ENCODE measurements at regions of chr3 and their contacts with region 1.

Region 1: GRCh38 chr3:157088601-157089454 is 71.1 kb downstream of the CCNL1 start:
- DNase-seq: peak; percentile 95
- H3K4me3 Mint-ChIP-seq: peak overlapping the region; percentile 76
- H3K27ac Mint-ChIP-seq: peak overlapping the region; percentile 95
- H3K4me1 Mint-ChIP-seq: peaks cover 71% of the 10 kb centered on the region
- H3K27me3 Mint-ChIP-seq: no peaks in the 10 kb centered on the region

Region 2: DNA sequence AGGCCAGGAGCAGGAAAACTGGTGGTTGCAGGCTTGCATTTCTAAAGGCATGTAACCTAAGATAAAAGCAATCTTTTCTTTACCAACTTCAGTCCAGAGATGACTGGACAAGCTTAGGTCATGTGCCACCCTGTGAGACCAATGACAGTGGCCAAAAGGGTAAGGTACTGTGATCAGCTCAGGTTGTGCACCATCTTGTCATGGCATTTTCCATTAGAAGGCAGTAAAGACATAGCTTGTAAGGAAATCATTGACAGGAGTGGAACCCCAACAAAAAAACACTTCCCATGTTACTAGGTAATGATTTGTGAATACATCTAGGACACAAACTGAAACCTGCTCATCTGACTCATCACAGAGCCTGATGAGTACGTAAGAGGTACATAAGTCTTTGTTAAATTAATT is 569.1 kb before region 1 on chr3:
- CTCF ChIA-PET with region 1: no interaction called
- POLR2A ChIA-PET with region 1: interaction called, 11 read pairs
- DNase-seq: no peak
- H3K4me3 Mint-ChIP-seq: no peak overlapping the region
- H3K27ac Mint-ChIP-seq: no peak overlapping the region
- H3K4me1 Mint-ChIP-seq: peaks cover 44% of the 10 kb centered on the region
- H3K27me3 Mint-ChIP-seq: peaks cover 14% of the 10 kb centered on the region

Region 3: GRCh38 chr3:156685198-156685597 is 403.6 kb before region 1 on chr3:
- CTCF ChIA-PET with region 1: interaction called, 3 read pairs
- POLR2A ChIA-PET with region 1: interaction called, 12 read pairs
- DNase-seq: no peak
- H3K4me3 Mint-ChIP-seq: peak overlapping the region; percentile 12
- H3K27ac Mint-ChIP-seq: peak overlapping the region; percentile 52
- H3K4me1 Mint-ChIP-seq: peaks cover 89% of the 10 kb centered on the region
- H3K27me3 Mint-ChIP-seq: no peaks in the 10 kb centered on the region

Region 4: DNA sequence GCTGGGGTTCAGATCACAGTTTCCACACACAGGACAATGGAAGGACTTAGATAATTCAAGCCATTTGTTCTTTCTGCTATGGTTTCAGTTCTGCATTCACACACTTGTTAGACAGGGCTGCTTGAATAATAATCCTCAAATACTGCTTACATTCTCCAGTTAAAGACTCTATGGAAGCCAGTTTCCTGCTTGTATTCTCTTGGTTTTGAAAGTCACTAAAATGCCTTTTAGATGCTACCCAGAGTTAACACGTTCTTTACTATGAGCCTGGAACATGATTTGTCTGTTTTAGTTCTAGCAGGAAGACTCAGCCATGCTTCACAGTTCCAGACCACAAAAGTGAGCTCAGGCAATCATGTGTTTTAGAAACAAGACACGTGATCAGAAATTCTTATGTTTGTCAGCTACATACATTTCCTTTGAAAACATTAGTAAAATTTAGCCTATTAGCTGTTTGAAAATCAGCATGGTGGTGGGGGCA is 110.3 kb before region 1 on chr3:
- CTCF ChIA-PET with region 1: no interaction called
- POLR2A ChIA-PET with region 1: no interaction called
- DNase-seq: no peak
- H3K4me3 Mint-ChIP-seq: no peak overlapping the region
- H3K27ac Mint-ChIP-seq: no peak overlapping the region
- H3K4me1 Mint-ChIP-seq: peaks cover 11% of the 10 kb centered on the region
- H3K27me3 Mint-ChIP-seq: peaks cover 1% of the 10 kb centered on the region

Region 5: GRCh38 chr3:157099326-157100095 is 10.7 kb after region 1 on chr3:
- CTCF ChIA-PET with region 1: interaction called, 11 read pairs
- POLR2A ChIA-PET with region 1: interaction called, 58 read pairs
- DNase-seq: no peak
- H3K4me3 Mint-ChIP-seq: no peak overlapping the region
- H3K27ac Mint-ChIP-seq: peak overlapping the region; percentile 27
- H3K4me1 Mint-ChIP-seq: peaks cover 63% of the 10 kb centered on the region
- H3K27me3 Mint-ChIP-seq: no peaks in the 10 kb centered on the region

Region 6: GRCh38 chr3:157130467-157131251 is 41.8 kb after region 1 on chr3:
- CTCF ChIA-PET with region 1: interaction called, 92 read pairs
- POLR2A ChIA-PET with region 1: interaction called, 381 read pairs
- DNase-seq: peak; percentile 82
- H3K4me3 Mint-ChIP-seq: peak overlapping the region; percentile 60
- H3K27ac Mint-ChIP-seq: peak overlapping the region; percentile 99
- H3K4me1 Mint-ChIP-seq: peaks cover 88% of the 10 kb centered on the region
- H3K27me3 Mint-ChIP-seq: no peaks in the 10 kb centered on the region

Region 7: DNA sequence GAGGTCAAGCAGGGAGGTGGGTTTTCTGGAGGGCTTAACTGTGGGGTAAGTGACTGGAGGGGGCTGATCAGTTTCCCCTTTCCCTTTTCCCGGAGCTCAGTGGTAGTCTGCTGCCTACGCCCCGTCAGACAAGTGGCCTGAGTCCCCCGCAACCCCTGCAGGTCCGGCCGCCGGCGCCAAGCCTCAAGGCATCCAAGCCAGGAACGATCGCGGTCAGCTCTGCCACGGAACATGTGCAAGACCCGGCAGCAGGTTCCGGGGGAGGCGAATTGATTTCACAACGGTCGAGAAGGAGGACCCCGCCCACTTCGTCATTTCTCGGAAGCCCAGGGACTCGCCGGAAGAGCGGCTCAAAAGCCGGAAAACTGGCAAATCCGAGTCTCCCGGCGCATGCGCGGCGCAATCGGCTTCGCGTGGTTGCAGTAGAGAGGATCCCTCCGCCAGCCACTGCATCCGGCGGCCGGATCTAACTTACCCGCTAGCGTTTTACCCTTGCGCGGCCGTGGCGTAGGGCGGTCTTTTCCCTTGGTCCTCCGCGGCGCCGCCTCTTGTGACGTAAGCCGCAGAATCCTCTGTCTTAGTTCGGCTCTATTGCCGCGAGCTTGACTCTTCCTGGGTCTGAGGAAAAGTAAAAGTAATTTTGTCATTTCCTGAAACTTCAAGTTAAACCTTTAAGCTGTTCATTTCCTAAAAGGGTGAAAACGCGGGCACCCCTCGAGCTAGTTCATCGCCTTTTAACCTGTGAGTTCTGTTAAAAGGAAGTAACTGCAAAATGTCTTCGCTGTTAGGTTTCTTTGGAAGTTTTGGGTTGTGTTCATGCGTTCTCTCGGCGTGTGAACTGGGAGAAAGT is 86.0 kb after region 1 on chr3:
- CTCF ChIA-PET with region 1: interaction called, 3 read pairs
- POLR2A ChIA-PET with region 1: interaction called, 38 read pairs
- DNase-seq: peak; percentile 99
- H3K4me3 Mint-ChIP-seq: peak overlapping the region; percentile 89
- H3K27ac Mint-ChIP-seq: peak overlapping the region; percentile 97
- H3K4me1 Mint-ChIP-seq: peaks cover 21% of the 10 kb centered on the region
- H3K27me3 Mint-ChIP-seq: peaks cover 4% of the 10 kb centered on the region

Region 8: DNA sequence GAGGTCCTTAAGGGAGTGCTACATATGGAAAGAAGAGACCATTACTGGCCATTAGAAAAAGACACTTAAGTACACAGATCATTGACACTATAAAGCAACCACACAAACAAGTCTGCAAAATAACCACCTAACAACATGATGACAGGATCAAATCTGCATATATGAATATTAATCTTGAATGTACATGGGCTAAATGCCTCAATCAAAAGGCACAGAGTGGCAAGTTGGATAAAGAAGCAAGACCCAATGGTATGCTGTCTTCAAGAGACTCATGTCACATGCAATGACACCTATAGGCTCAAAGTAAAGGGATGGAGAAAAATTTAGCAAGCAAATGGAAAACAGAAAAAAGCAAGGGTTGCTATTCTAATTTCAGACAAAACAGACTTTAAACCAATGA is 99.6 kb after region 1 on chr3:
- CTCF ChIA-PET with region 1: no interaction called
- POLR2A ChIA-PET with region 1: no interaction called
- DNase-seq: no peak
- H3K4me3 Mint-ChIP-seq: no peak overlapping the region
- H3K27ac Mint-ChIP-seq: no peak overlapping the region
- H3K4me1 Mint-ChIP-seq: no peaks in the 10 kb centered on the region
- H3K27me3 Mint-ChIP-seq: peaks cover 10% of the 10 kb centered on the region